CD8-positive, alpha-beta T cell (primary cell): ENCODE measurements at regions of chr11 and their contacts with region 1.

Region 1: DNA sequence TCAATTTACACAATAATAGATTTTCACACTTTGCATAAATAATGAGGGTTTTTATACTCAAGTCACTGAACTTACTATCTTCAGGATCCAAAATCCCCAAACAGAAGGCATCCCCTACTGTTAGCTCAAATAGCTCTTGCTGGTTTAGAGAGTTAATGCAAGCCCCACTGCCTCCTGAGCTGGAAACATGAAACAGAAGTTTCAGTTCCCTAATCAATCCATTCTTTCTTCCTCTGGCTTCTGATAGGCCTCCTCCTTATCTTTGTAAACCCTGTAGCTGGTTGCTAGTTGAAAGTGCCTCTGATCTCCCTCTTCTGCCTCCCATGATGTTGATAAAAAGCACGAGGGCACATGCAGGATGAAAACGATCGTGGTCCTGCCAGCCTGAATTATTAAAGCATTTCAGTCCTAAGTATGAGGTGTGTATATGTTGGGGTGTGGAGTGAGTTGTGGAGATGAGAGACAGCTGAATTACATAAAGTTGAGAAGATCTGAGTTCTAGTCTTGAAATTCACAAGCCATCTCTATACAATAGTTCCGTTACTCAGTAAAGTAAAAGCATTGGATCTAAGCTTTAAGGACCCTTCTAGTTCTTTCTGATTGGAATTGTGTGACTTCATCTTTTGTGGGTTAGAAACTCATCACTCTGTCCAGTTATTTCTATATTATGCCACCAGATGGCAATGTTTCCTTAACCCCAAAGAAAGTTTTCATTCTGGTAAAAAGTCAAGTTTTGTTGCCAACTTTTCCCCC is 35.0 kb upstream of the EHF start:
- DNase-seq: peak in 2 of 9 experiments; percentile 53 to 60
- ATAC-seq: no peak
- H3K4me3 ChIP-seq: no peak overlapping the region
- H3K4me3 Mint-ChIP-seq: no peak overlapping the region
- H3K27ac ChIP-seq: no peak overlapping the region
- H3K27ac Mint-ChIP-seq: no peak overlapping the region
- H3K4me1 ChIP-seq: no peaks in the 10 kb centered on the region
- H3K4me1 Mint-ChIP-seq: peaks cover 5% of the 10 kb centered on the region
- H3K27me3 ChIP-seq: no peaks in the 10 kb centered on the region
- H3K27me3 Mint-ChIP-seq: peaks cover 30% of the 10 kb centered on the region
- CTCF ChIP-seq: peak; percentile 78

Region 2: GRCh38 chr11:34825670-34826383 is 239.9 kb after region 1 on chr11:
- CTCF ChIA-PET with region 1: no interaction called
- POLR2A ChIA-PET with region 1: no interaction called
- intact Hi-C with region 1: no loop called
- DNase-seq: no peak
- ATAC-seq: no peak
- H3K4me3 ChIP-seq: no peak overlapping the region
- H3K4me3 Mint-ChIP-seq: no peak overlapping the region
- H3K27ac ChIP-seq: no peak overlapping the region
- H3K27ac Mint-ChIP-seq: no peak overlapping the region
- H3K4me1 ChIP-seq: no peaks in the 10 kb centered on the region
- H3K4me1 Mint-ChIP-seq: no peaks in the 10 kb centered on the region
- H3K27me3 ChIP-seq: no peaks in the 10 kb centered on the region
- H3K27me3 Mint-ChIP-seq: peaks cover 8% of the 10 kb centered on the region
- CTCF ChIP-seq: no peak

Region 3: GRCh38 chr11:34840736-34841386 is 254.9 kb after region 1 on chr11:
- CTCF ChIA-PET with region 1: interaction called, 8 read pairs
- POLR2A ChIA-PET with region 1: no interaction called
- intact Hi-C with region 1: loop called in 1 of 2 experiments (anchors 5 kb)
- DNase-seq: peak in 5 of 9 experiments; percentile 7 to 49 (median 43)
- ATAC-seq: no peak
- H3K4me3 ChIP-seq: no peak overlapping the region
- H3K4me3 Mint-ChIP-seq: no peak overlapping the region
- H3K27ac ChIP-seq: no peak overlapping the region
- H3K27ac Mint-ChIP-seq: no peak overlapping the region
- H3K4me1 ChIP-seq: no peaks in the 10 kb centered on the region
- H3K4me1 Mint-ChIP-seq: no peaks in the 10 kb centered on the region
- H3K27me3 ChIP-seq: no peaks in the 10 kb centered on the region
- H3K27me3 Mint-ChIP-seq: peaks cover 15% of the 10 kb centered on the region
- CTCF ChIP-seq: peak; percentile 52

Region 4: GRCh38 chr11:34890812-34891211 is 304.9 kb after region 1 on chr11:
- CTCF ChIA-PET with region 1: interaction called, 39 read pairs
- POLR2A ChIA-PET with region 1: no interaction called
- intact Hi-C with region 1: loop called (anchors 1 kb)
- DNase-seq: peak in 2 of 9 experiments; percentile 30 to 47
- ATAC-seq: no peak
- H3K4me3 ChIP-seq: no peak overlapping the region
- H3K4me3 Mint-ChIP-seq: no peak overlapping the region
- H3K27ac ChIP-seq: no peak overlapping the region
- H3K27ac Mint-ChIP-seq: no peak overlapping the region
- H3K4me1 ChIP-seq: no peaks in the 10 kb centered on the region
- H3K4me1 Mint-ChIP-seq: no peaks in the 10 kb centered on the region
- H3K27me3 ChIP-seq: no peaks in the 10 kb centered on the region
- H3K27me3 Mint-ChIP-seq: no peaks in the 10 kb centered on the region
- CTCF ChIP-seq: peak; percentile 45

Region 5: DNA sequence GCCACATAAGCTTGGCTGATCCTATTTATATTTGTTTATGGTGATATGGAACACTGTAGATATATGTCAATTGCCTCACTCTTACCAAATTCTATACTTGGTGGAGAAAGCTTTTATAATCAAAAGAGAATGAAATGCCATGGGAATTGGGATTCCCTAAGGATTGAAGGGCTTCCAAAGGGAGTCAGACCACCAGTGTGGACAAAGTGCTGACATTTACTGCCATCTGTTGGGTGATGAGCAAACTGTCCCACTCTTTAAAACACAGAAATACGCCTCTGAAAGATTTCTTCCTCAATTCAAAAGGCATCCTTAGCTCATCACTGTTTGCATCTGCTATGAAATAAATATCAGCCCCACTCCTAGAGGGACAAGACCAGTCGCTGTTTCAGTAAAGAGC is 826.4 kb after region 1 on chr11:
- CTCF ChIA-PET with region 1: interaction called, 16 read pairs
- POLR2A ChIA-PET with region 1: no interaction called
- intact Hi-C with region 1: loop called (anchors 1 to 5 kb)
- DNase-seq: peak in 1 of 9 experiments; percentile 14
- ATAC-seq: no peak
- H3K4me3 ChIP-seq: no peak overlapping the region
- H3K4me3 Mint-ChIP-seq: no peak overlapping the region
- H3K27ac ChIP-seq: no peak overlapping the region
- H3K27ac Mint-ChIP-seq: no peak overlapping the region
- H3K4me1 ChIP-seq: no peaks in the 10 kb centered on the region
- H3K4me1 Mint-ChIP-seq: no peaks in the 10 kb centered on the region
- H3K27me3 ChIP-seq: peaks cover 3 to 5% of the 10 kb centered on the region in 2 experiments
- H3K27me3 Mint-ChIP-seq: peaks cover 40% of the 10 kb centered on the region
- CTCF ChIP-seq: peak; percentile 17

Region 6: GRCh38 chr11:35485656-35486322 is 899.9 kb after region 1 on chr11:
- CTCF ChIA-PET with region 1: interaction called, 9 read pairs
- POLR2A ChIA-PET with region 1: no interaction called
- intact Hi-C with region 1: loop called (anchors 1 kb)
- DNase-seq: peak; percentile 34 to 80 (median 69)
- ATAC-seq: peak; percentile 68
- H3K4me3 ChIP-seq: no peak overlapping the region
- H3K4me3 Mint-ChIP-seq: no peak overlapping the region
- H3K27ac ChIP-seq: no peak overlapping the region
- H3K27ac Mint-ChIP-seq: no peak overlapping the region
- H3K4me1 ChIP-seq: no peaks in the 10 kb centered on the region
- H3K4me1 Mint-ChIP-seq: no peaks in the 10 kb centered on the region
- H3K27me3 ChIP-seq: no peaks in the 10 kb centered on the region
- H3K27me3 Mint-ChIP-seq: peaks cover 51% of the 10 kb centered on the region
- CTCF ChIP-seq: peak; percentile 97

Region 7: GRCh38 chr11:36265793-36266628 is 1680.1 kb after region 1 on chr11:
- CTCF ChIA-PET with region 1: no interaction called
- POLR2A ChIA-PET with region 1: no interaction called
- intact Hi-C with region 1: loop called in 1 of 2 experiments (anchors 10 kb)
- DNase-seq: peak; percentile 13 to 72 (median 48)
- ATAC-seq: peak; percentile 63
- H3K4me3 ChIP-seq: no peak overlapping the region
- H3K4me3 Mint-ChIP-seq: no peak overlapping the region
- H3K27ac ChIP-seq: no peak overlapping the region
- H3K27ac Mint-ChIP-seq: no peak overlapping the region
- H3K4me1 ChIP-seq: no peaks in the 10 kb centered on the region
- H3K4me1 Mint-ChIP-seq: no peaks in the 10 kb centered on the region
- H3K27me3 ChIP-seq: no peaks in the 10 kb centered on the region
- H3K27me3 Mint-ChIP-seq: peaks cover 18% of the 10 kb centered on the region
- CTCF ChIP-seq: peak; percentile 71